Posterior vena cava (tissue), 2 donors: ENCODE measurements at regions of chr16 and their contacts with region 1.

Region 1: DNA sequence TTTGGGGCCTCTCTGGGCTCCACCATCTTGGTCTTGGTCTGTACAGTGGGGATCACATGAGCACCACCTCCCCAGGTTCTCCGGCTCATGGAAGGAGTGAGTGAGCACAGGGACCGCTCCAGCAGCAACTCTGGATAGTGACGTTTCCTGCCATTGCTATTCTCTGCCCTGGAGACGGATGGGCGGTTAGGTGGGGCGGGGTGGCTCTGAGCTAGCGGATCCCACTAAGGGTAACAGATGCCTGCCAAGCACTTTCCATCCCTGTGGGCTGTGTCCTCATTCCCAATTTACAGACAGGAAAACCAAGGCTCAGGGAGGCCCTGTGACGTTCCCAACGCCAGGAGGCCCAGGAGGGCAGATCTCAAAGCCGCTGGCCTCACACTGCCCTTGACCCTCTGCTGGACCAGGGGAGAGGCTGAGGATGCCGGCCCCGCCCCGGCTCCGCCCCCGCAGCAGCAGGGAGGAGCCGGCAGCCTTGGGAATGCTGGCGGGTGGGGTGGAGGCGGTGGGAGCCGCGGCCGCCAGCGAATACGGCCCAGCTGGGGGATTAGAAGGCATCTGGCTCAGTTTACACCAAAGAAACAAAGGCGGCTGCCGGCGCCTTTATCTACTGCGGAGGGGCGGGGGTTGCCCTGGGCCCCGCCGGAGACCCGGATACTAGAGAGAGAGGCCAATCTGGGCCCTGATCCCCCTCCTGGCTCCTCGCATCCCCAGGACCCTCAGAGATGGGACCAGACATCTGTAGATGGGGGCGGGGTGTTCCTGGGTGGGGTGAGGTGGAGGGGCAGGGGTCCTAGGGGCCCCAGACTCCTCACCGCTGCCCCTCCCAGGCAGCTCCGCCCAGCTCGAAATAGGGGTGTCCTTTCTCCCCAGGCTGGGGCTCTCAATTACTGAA is 122.3 kb upstream of the CIBAR2 start:
- DNase-seq: peak; percentile 88

Region 2: DNA sequence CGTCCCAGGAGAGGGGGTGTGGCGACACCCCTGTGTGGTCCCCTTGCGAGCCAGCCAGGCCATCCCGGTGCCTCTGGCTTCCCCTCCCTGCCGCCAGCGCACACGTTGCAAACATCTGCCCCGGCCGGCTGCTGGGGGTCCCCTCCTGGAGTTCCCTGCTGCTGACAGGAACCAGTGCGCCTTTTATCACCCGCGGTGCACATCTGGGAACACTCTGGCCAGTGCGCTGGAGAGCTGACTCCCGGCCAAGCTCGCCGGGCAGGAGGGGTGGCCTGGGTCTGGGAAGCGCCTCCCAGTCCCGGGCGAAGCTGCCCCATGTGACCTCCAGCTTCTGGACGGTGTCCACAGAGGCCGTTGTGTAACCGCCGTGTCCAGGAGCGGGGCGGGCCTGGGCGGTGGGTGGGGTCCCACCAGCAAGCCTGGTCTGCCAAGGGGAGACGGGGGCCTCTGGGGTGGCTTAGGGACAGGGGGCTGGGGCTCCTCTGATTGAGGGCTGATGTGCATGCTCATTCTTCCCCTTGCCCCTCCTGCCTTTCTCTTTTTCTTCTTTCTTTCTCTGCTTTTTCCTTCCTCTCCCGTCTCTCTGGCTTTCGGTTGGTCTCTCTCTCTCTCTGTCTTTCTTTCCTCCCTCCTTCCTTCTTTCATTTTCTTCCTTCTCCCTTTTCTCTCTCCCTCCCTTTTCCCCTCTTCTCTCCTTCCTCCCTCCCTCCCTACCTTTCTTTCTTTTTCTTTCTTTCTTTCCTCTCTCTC is 97.1 kb before region 1 on chr16:
- intact Hi-C with region 1: loop called in 1 of 2 experiments (anchors 10 kb)
- DNase-seq: peak; percentile 98

Region 3: DNA sequence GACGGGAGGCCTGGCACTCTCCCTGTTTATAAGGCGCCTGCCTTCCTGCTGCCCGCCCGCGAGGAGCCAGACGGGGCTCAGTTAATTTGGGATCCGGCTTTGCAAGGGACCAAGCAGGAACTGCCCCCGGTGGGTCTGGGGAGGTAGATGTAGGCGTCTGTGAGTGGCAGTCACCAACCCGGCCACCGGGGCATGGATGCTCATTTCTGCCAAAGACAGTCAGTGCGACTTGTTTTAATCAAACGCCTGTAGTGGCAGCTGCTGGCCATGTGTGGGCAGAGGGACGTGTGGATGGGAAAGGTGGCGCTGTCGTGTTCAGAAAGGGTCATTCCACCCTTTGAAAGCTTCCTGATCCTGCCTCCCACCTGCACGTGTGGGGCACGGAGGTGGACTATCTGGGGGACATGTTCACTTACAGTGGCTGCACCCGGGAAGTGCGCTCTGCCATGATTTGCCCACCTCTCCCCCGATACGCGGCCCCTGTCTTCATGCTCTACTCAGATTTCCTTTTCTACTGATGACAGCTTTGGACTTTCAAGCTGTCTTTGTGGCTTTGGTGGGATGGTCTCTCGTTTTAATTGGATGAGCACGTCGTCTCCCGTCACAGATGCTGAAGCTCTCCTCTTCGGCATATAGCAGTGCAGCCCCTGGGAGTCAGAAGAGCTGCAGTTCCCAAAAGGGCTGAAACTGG is 62.0 kb before region 1 on chr16:
- intact Hi-C with region 1: loop called in 1 of 2 experiments (anchors 10 kb)
- DNase-seq: peak; percentile 76

Region 4: DNA sequence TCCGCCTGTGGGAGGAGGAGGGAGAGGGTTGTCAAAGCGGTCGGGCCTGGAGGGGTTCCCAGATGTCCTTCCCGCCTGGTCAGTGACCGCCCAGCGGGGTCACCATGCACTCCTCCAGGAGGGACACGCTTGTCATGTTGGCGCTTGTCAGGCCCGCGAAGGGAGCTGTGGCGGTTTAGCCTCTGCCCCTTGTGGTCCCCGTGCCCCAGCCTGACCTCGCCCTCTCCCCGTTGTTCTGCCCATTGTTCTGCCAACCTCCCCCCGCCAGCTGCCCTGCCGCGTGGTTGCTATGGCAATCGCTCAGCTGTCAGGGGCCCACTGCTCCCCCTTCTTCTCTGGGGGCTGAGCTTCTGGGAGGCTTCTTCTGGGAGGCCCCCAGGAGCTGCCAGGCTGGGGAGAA is 24.1 kb after region 1 on chr16:
- intact Hi-C with region 1: loop called in 1 of 2 experiments (anchors 1 kb)
- DNase-seq: no peak